CD4-positive, alpha-beta T cell (primary cell): ENCODE measurements at regions of chr7 and their contacts with region 1.

Region 1: GRCh38 chr7:101031082-101031481 is 11.2 kb downstream of the MUC17 start:
- DNase-seq: peak in 2 of 14 experiments; percentile 8 to 11
- ATAC-seq: no peak
- H3K4me3 ChIP-seq: no peak overlapping the region
- H3K4me3 Mint-ChIP-seq: no peak overlapping the region
- H3K27ac ChIP-seq: no peak overlapping the region
- H3K27ac Mint-ChIP-seq: no peak overlapping the region
- H3K4me1 ChIP-seq: no peaks in the 10 kb centered on the region
- H3K4me1 Mint-ChIP-seq: no peaks in the 10 kb centered on the region
- H3K27me3 ChIP-seq: peaks cover 0 to 5% of the 10 kb centered on the region in 2 experiments
- H3K27me3 Mint-ChIP-seq: peaks cover 5% of the 10 kb centered on the region
- CTCF ChIP-seq: no peak

Region 2: DNA sequence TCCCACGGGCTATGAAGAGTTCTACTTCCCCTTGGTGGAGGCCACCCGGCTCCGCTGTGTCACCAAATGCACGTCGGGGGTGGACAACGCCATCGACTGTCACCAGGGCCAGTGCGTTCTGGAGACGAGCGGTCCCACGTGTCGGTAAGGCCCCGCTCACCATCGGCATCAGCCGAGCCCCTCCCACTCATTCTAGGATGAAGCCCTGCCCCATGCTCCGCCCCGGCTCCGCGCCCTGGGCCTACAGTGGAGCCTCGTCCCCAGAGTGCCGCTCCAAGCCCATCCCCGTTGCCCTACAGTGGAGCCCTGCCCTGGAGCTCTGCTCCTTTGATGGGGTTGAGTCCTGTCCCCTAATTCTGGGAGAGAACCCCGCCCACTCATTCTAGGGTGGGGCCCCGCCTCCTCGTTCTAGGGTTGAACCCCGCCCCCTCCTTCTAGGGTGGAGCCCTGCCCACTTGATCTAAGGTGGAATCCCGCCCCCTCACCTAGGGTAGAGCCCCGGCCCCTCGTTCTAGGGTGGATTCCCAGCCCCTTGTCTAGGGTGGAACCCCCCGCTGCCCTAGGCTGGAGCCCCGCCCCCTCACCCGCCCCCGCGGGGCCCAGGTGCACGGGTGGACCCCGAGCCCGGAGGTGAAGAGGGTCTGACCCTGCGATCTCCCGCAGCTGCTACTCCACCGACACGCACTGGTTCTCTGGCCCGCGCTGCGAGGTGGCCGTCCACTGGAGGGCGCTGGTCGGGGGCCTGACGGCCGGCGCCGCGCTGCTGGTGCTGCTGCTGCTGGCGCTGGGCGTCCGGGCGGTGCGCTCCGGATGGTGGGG is 65.2 kb before region 1 on chr7:
- CTCF ChIA-PET with region 1: no interaction called
- POLR2A ChIA-PET with region 1: no interaction called
- intact Hi-C with region 1: loop called in 1 of 2 experiments (anchors 2 kb)
- DNase-seq: peak; percentile 49 to 81 (median 63)
- ATAC-seq: peak; percentile 82
- H3K4me3 ChIP-seq: peak overlapping the region; percentile 49
- H3K4me3 Mint-ChIP-seq: peak overlapping the region; percentile 84
- H3K27ac ChIP-seq: no peak overlapping the region
- H3K27ac Mint-ChIP-seq: no peak overlapping the region
- H3K4me1 ChIP-seq: peaks cover 28% of the 10 kb centered on the region
- H3K4me1 Mint-ChIP-seq: peaks cover 22% of the 10 kb centered on the region
- H3K27me3 ChIP-seq: peaks cover 52 to 62% of the 10 kb centered on the region in 2 experiments
- H3K27me3 Mint-ChIP-seq: peaks cover 68% of the 10 kb centered on the region
- CTCF ChIP-seq: peak; percentile 37

Region 3: GRCh38 chr7:101457007-101457755 is 426.1 kb after region 1 on chr7:
- CTCF ChIA-PET with region 1: no interaction called
- POLR2A ChIA-PET with region 1: no interaction called
- intact Hi-C with region 1: no loop called
- DNase-seq: no peak
- ATAC-seq: no peak
- H3K4me3 ChIP-seq: no peak overlapping the region
- H3K4me3 Mint-ChIP-seq: no peak overlapping the region
- H3K27ac ChIP-seq: no peak overlapping the region
- H3K27ac Mint-ChIP-seq: no peak overlapping the region
- H3K4me1 ChIP-seq: no peaks in the 10 kb centered on the region
- H3K4me1 Mint-ChIP-seq: no peaks in the 10 kb centered on the region
- H3K27me3 ChIP-seq: no peaks in the 10 kb centered on the region
- H3K27me3 Mint-ChIP-seq: no peaks in the 10 kb centered on the region
- CTCF ChIP-seq: no peak